ENCODE measurements at regions of chr4 and their contacts with region 1.

Region 1: DNA sequence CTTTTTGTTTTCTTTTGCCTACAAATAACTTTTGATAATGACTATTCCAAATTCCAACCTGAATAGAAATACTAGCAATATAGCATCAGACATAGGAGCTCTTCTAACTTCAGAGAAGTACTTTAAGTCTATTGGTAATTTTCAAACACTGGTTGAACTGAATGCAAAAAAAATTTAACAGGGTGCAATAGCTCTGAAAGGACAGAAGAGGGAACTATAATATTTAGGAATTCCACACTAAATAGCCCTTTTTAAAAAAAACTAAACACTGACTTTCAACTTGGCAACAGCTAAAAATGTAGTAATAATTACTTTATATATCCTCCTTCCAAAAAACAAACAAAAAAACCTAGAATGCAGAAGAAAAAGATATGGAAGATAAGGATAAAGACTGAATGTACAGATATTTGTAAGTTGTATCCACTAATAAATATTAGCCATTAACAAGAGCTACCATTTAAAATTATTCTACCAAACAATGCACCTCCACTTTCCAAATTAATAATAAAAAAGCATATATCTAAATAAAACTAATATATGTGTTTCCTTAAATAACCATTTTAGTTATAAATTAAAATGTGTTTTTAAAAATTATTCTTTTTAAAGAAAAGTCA is 81.4 kb downstream of the FBXW7 start:
- DNase-seq: no peak
- H3K4me3 ChIP-seq: no peak overlapping the region
- H3K27ac ChIP-seq: no peak overlapping the region
- H3K27me3 ChIP-seq: no peaks in the 10 kb centered on the region
- CTCF ChIP-seq: peak; percentile 72

Region 2: DNA sequence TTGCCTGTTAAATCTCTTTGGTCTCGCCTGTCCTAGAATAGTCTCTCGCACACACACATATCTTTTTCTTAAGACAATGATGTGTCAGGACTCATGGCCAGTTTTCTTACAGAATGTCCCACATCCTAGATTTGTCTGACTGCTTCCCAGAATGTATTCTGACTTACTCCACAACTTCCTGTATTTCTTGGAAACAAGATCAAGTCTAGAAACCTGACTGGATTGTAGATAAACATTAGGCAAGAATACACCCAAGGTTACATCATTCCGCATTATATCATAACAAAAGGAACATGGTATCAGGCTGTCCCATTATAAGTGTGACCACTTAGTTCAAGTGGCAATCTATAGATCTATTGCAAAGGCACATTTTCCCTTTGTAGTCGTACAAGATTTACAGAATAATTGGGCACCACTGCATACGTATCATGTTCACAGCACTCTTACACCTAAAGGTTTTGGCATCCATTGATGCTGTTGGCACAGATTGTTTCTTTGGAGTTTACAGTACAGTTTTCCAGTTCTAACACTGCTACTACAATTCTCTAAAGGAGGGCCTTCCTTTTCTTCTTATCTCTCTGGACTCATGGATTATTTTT is 25.0 kb after region 1 on chr4:
- CTCF ChIA-PET with region 1: interaction called, 13 read pairs
- POLR2A ChIA-PET with region 1: no interaction called
- DNase-seq: no peak
- H3K4me3 ChIP-seq: no peak overlapping the region
- H3K27ac ChIP-seq: no peak overlapping the region
- H3K27me3 ChIP-seq: no peaks in the 10 kb centered on the region
- CTCF ChIP-seq: no peak

Region 3: GRCh38 chr4:152485726-152486276 is 31.3 kb after region 1 on chr4:
- CTCF ChIA-PET with region 1: interaction called, 13 read pairs
- POLR2A ChIA-PET with region 1: no interaction called
- DNase-seq: peak; percentile 42
- H3K4me3 ChIP-seq: peak overlapping the region; percentile 18; the same call in 1 of the 2 replicates
- H3K27ac ChIP-seq: no peak overlapping the region
- H3K27me3 ChIP-seq: no peaks in the 10 kb centered on the region
- CTCF ChIP-seq: no peak

Region 4: GRCh38 chr4:152640058-152640833 is 185.7 kb after region 1 on chr4:
- CTCF ChIA-PET with region 1: interaction called, 84 read pairs
- POLR2A ChIA-PET with region 1: no interaction called
- DNase-seq: no peak
- H3K4me3 ChIP-seq: no peak overlapping the region
- H3K27ac ChIP-seq: no peak overlapping the region
- H3K27me3 ChIP-seq: peaks cover 3% of the 10 kb centered on the region
- CTCF ChIP-seq: peak; percentile 59

Region 5: DNA sequence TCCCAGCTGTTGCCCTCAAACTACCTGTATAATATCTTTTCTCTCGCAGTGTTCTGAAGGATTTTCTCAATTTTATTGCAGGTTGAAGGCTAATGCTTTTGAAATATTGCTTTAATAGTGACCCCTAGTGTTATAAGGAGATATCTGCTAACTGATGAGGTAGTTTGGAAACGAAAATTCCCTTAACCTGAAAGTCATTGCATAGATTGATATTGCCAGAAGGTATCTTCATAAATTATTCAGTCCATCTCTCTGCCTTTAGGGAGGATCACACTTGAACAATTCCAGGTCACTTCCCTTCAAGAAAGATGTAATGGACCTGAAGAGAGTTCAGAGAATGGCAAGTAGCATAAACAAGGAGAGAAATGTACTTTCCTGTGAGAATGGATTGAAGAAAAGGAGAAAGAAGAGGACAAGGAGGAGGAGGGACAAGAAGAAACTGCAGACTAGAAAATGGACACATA is 280.9 kb after region 1 on chr4:
- CTCF ChIA-PET with region 1: interaction called, 15 read pairs
- POLR2A ChIA-PET with region 1: no interaction called
- DNase-seq: no peak
- H3K4me3 ChIP-seq: no peak overlapping the region
- H3K27ac ChIP-seq: no peak overlapping the region
- H3K27me3 ChIP-seq: peaks cover 10% of the 10 kb centered on the region
- CTCF ChIP-seq: peak; percentile 61

Region 6: GRCh38 chr4:153008578-153009199 is 554.2 kb after region 1 on chr4:
- CTCF ChIA-PET with region 1: no interaction called
- POLR2A ChIA-PET with region 1: no interaction called
- DNase-seq: no peak
- H3K4me3 ChIP-seq: no peak overlapping the region
- H3K27ac ChIP-seq: no peak overlapping the region
- H3K27me3 ChIP-seq: peaks cover 12% of the 10 kb centered on the region
- CTCF ChIP-seq: no peak

Measured in AG04450 (cell line).